OCI-LY7 (cell line): ENCODE measurements at regions of chr10 and their contacts with region 1.

Region 1: DNA sequence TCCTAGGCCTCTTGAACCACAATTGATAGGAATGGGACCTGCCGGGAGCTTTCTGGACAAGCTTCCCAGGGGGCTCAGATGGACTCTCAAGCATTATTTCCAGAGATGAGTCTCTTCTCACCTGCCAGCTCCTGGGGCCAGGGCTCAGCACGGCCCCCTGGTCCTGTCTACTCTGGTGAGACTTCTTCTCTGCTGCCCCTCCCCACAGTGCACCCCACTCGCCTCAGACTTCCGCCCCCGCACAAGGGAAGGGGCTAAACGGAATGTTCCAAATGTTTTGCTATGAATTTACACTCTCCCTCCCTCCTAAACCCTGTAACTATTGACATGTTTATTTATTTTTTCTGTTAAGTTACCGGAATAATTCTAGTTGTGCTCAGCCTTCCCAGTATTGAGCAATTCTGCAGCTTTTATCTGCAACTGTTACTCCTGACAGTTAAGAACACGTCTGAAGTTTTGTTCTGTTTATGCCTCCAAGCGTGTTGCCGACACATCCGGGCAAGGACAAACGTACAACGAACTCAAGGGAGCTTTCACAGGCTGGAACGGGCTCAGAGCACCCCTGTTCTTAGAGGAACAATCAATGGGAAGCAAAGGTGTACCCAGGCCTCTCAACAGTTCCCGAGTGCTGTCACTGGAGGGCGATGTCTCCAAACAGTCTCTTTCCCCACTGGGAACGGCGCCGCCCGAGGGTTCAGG is 55.2 kb downstream of the FHIP2A start:
- DNase-seq: peak; percentile 61
- H3K4me3 ChIP-seq: no peak overlapping the region
- H3K27ac ChIP-seq: no peak overlapping the region
- H3K4me1 ChIP-seq: no peaks in the 10 kb centered on the region
- CTCF ChIP-seq: peak; percentile 77

Region 2: GRCh38 chr10:115049957-115050356 is 173.2 kb after region 1 on chr10:
- CTCF ChIA-PET with region 1: no interaction called
- POLR2A ChIA-PET with region 1: no interaction called
- intact Hi-C with region 1: loop called (anchors 10 kb)
- DNase-seq: no peak
- H3K4me3 ChIP-seq: no peak overlapping the region
- H3K27ac ChIP-seq: no peak overlapping the region
- H3K4me1 ChIP-seq: no peaks in the 10 kb centered on the region
- CTCF ChIP-seq: no peak

Region 3: DNA sequence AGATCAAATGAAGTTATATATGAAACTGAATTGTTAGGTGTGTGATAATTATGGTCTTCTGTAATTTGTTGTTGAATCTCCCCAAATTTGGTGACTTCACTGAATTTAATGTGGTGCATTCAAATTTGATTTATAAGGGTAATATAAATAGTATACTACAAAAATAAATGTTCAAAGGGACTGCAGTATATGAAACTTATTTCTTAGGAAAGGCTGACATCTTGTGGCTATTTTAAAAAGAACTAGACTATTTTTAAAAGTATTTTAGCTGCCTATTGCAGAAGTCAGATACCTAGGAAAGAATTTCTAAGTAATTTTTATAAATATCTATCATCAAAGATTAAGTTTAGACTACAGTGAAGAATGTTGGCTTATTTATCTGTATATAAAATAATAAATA is 253.0 kb after region 1 on chr10:
- CTCF ChIA-PET with region 1: no interaction called
- POLR2A ChIA-PET with region 1: no interaction called
- intact Hi-C with region 1: loop called (anchors 2 kb)
- DNase-seq: peak; percentile 45
- H3K4me3 ChIP-seq: no peak overlapping the region
- H3K27ac ChIP-seq: no peak overlapping the region
- H3K4me1 ChIP-seq: no peaks in the 10 kb centered on the region
- CTCF ChIP-seq: peak; percentile 80